ENCODE measurements at regions of chr1 and their contacts with region 1.

Region 1: GRCh38 chr1:169893494-169894362 is at the start of gene SCYL3:
- DNase-seq: peak; percentile 78 to 97 (median 86)
- ATAC-seq: peak; percentile 82
- H3K4me3 ChIP-seq: peak within 1 kb of the TSS; percentile 79
- H3K4me3 Mint-ChIP-seq: peak within 1 kb of the TSS; percentile 97
- H3K27ac ChIP-seq: peak within 1 kb of the TSS; percentile 98 to 100
- H3K27ac Mint-ChIP-seq: peak within 1 kb of the TSS; percentile 99
- H3K4me1 ChIP-seq: peaks cover 23% of the 10 kb centered on the region
- H3K4me1 Mint-ChIP-seq: peaks cover 53% of the 10 kb centered on the region
- H3K27me3 ChIP-seq: no peaks in the 10 kb centered on the region
- H3K27me3 Mint-ChIP-seq: no peaks in the 10 kb centered on the region
- CTCF ChIP-seq: no peak
- total RNA-seq, gene SCYL3: 3.5 to 3.6 TPM

Region 2: DNA sequence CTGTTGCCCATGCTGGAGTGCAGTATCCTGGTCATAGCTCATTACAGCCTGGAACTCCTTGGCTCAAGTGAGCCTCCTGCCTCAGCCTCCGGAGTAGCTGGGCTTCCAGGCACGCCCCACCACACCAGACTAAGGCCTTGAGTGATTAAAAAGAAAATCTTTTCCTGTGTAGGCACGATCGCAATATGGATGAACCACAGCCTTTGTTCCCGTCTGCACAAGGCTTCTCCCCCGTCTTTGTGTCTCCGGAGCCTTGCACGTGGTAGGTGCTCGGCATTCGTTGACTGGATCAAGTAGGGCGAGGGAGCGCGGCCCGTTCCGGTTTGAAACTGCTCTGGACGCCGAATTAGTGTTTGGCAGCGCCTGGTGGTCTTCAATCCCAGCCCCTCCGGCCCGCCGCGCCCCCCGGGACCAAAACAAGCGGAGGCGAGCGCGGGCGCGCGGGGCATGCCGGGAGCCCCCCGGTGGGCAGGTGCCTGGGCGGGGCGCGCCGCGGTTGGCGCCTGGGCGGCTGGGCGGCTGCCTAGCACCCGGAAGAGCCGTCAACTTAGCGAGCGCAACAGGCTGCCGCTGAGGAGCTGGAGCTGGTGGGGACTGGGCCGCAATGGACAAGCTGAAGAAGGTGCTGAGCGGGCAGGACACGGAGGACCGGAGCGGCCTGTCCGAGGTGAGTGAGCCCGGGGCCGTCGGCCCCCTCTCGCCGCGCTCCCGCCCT is 1668.1 kb before region 1 on chr1 and contains the start of gene SFT2D2:
- CTCF ChIA-PET with region 1: no interaction called
- POLR2A ChIA-PET with region 1: interaction called, 3 read pairs
- intact Hi-C with region 1: loop called in 1 of 2 experiments (anchors 5 kb)
- DNase-seq: peak; percentile 57 to 89 (median 72)
- ATAC-seq: peak; percentile 96
- H3K4me3 ChIP-seq: peak within 1 kb of the TSS; percentile 94
- H3K4me3 Mint-ChIP-seq: peak within 1 kb of the TSS; percentile 99
- H3K27ac ChIP-seq: peak within 1 kb of the TSS; percentile 28 to 66
- H3K27ac Mint-ChIP-seq: peak within 1 kb of the TSS; percentile 88
- H3K4me1 ChIP-seq: peaks cover 48% of the 10 kb centered on the region
- H3K4me1 Mint-ChIP-seq: peaks cover 54% of the 10 kb centered on the region
- H3K27me3 ChIP-seq: no peaks in the 10 kb centered on the region
- H3K27me3 Mint-ChIP-seq: peaks cover 10% of the 10 kb centered on the region
- CTCF ChIP-seq: no peak
- total RNA-seq, gene SFT2D2: 47.0 to 51.7 TPM

Region 3: DNA sequence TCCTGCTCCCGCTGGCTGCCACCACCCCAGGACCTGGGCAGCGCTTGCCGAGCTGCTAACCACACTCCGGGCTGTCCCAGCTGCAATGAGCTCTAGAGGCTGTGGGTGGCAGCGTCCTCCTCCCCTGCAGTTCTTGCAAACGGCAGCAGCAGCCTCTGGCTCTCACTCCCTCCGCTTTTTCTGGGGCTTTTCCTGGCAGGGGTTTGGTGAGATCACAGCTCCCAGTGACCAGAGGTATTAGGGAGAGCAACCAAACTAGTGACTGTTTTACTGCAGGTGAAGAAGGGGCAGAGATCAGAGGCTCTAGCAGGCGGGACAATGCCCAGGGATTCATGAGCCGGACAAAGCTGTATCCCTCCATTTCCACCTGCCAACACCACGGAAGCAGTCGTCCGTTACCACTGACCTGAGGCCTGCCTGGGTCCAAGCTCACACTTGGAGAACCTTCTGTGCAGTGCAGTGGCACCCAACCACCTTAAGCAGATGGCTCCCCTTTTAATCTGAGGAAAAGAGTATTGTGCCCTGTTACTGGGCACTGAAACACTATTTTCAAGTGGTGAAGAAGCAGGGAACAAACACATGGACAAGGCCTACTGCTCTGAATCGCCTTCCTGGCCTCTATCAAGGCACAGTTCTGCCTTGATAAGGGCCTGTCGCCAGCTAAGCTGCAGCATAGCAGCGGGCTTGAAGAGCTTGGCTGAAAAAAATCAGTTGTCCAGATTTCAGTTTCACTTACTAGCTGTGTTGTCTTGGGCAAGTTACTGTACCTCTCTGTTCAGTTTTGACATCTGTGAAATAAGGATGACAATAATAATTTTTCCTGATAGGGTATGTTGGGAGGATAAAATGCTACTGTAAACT is 307.1 kb before region 1 on chr1 and contains the start of gene F5:
- CTCF ChIA-PET with region 1: no interaction called
- POLR2A ChIA-PET with region 1: interaction called, 5 read pairs
- intact Hi-C with region 1: loop called in 1 of 2 experiments (anchors 10 kb)
- DNase-seq: peak; percentile 65 to 88 (median 72)
- ATAC-seq: peak; percentile 99
- H3K4me3 ChIP-seq: peak within 1 kb of the TSS; percentile 64
- H3K4me3 Mint-ChIP-seq: peak within 1 kb of the TSS; percentile 91
- H3K27ac ChIP-seq: no peak within 1 kb of the TSS
- H3K27ac Mint-ChIP-seq: peak within 1 kb of the TSS; percentile 71
- H3K4me1 ChIP-seq: peaks cover 19% of the 10 kb centered on the region
- H3K4me1 Mint-ChIP-seq: peaks cover 53% of the 10 kb centered on the region
- H3K27me3 ChIP-seq: no peaks in the 10 kb centered on the region
- H3K27me3 Mint-ChIP-seq: no peaks in the 10 kb centered on the region
- CTCF ChIP-seq: peak; percentile 71
- total RNA-seq, gene F5: 5.4 to 6.2 TPM

Region 4: GRCh38 chr1:169745015-169745861 is 148.5 kb before region 1 on chr1:
- CTCF ChIA-PET with region 1: no interaction called
- POLR2A ChIA-PET with region 1: no interaction called
- intact Hi-C with region 1: no loop called
- DNase-seq: no peak
- ATAC-seq: no peak
- H3K4me3 ChIP-seq: no peak overlapping the region
- H3K4me3 Mint-ChIP-seq: no peak overlapping the region
- H3K27ac ChIP-seq: no peak overlapping the region
- H3K27ac Mint-ChIP-seq: no peak overlapping the region
- H3K4me1 ChIP-seq: no peaks in the 10 kb centered on the region
- H3K4me1 Mint-ChIP-seq: no peaks in the 10 kb centered on the region
- H3K27me3 ChIP-seq: peaks cover 0 to 5% of the 10 kb centered on the region in 2 experiments
- H3K27me3 Mint-ChIP-seq: no peaks in the 10 kb centered on the region
- CTCF ChIP-seq: no peak

Region 5: GRCh38 chr1:169794530-169795416 is 99.0 kb before region 1 on chr1 and contains the start of gene METTL18:
- CTCF ChIA-PET with region 1: no interaction called
- POLR2A ChIA-PET with region 1: interaction called, 35 read pairs
- intact Hi-C with region 1: loop called (anchors 2 kb)
- DNase-seq: peak; percentile 82 to 96 (median 88)
- ATAC-seq: peak; percentile 97
- H3K4me3 ChIP-seq: peak within 1 kb of the TSS; percentile 81
- H3K4me3 Mint-ChIP-seq: peak within 1 kb of the TSS; percentile 99
- H3K27ac ChIP-seq: peak within 1 kb of the TSS; percentile 89 to 94
- H3K27ac Mint-ChIP-seq: peak within 1 kb of the TSS; percentile 94
- H3K4me1 ChIP-seq: peaks cover 13% of the 10 kb centered on the region
- H3K4me1 Mint-ChIP-seq: peaks cover 52% of the 10 kb centered on the region
- H3K27me3 ChIP-seq: no peaks in the 10 kb centered on the region
- H3K27me3 Mint-ChIP-seq: no peaks in the 10 kb centered on the region
- CTCF ChIP-seq: no peak
- total RNA-seq, gene METTL18: 5.1 to 5.6 TPM

Region 6: DNA sequence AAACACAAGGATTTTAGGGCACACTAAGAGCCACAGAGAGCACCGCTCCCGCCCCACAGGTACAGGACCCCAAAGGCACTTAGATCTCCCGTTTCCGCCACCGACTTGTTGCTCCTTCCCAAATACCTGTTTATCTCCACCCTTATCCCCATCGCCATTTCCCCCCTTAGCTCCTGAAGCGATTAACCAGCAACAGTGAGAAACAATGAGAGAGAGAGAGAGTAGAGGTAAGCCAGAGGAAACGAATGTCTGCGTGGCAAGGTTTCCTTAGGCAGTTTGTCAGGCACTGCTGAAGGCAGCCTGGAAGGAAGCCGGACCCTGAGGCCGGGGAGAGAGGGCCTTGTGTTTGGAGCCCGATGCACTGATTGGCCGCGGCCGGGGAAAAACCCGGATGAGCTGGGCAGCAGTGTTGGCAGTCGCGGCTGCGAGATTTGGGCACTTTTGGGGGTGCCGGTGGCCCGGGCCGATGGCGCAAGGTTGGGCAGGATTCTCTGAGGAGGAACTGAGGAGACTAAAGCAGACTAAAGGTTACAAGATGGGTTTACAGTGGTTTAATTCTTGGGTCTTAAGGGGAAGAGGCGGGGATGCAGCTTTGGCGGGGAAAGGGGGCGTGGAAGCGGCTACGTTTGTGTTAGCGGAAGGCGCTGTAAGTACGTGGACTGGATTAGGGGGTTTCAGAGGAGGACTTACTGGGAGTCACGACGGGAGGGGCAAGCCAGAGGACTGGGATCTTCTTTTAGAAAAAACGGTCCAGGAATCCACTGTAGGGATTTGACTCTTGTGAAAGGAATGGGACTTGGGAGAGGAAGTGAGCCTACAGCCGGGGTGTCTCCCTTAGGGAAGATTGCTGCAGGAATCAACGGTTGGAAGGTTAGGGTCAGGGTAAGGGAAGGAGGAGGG is 638.3 kb after region 1 on chr1 and contains the start of gene GORAB:
- CTCF ChIA-PET with region 1: no interaction called
- POLR2A ChIA-PET with region 1: interaction called, 12 read pairs
- intact Hi-C with region 1: no loop called
- DNase-seq: peak; percentile 69 to 92 (median 78)
- ATAC-seq: peak; percentile 91
- H3K4me3 ChIP-seq: peak within 1 kb of the TSS; percentile 61
- H3K4me3 Mint-ChIP-seq: no peak within 1 kb of the TSS
- H3K27ac ChIP-seq: peak within 1 kb of the TSS; percentile 73 to 86
- H3K27ac Mint-ChIP-seq: no peak within 1 kb of the TSS
- H3K4me1 ChIP-seq: peaks cover 12% of the 10 kb centered on the region
- H3K4me1 Mint-ChIP-seq: peaks cover 20% of the 10 kb centered on the region
- H3K27me3 ChIP-seq: no peaks in the 10 kb centered on the region
- H3K27me3 Mint-ChIP-seq: no peaks in the 10 kb centered on the region
- CTCF ChIP-seq: no peak
- total RNA-seq, gene GORAB: 23.0 to 26.6 TPM

Region 7: GRCh38 chr1:171781176-171781875 is 1887.6 kb after region 1 on chr1 and contains the start of gene METTL13:
- CTCF ChIA-PET with region 1: no interaction called
- POLR2A ChIA-PET with region 1: interaction called, 9 read pairs
- intact Hi-C with region 1: loop called in 1 of 2 experiments (anchors 10 kb)
- DNase-seq: peak; percentile 95 to 100 (median 98)
- ATAC-seq: peak; percentile 91
- H3K4me3 ChIP-seq: peak within 1 kb of the TSS; percentile 78
- H3K4me3 Mint-ChIP-seq: peak within 1 kb of the TSS; percentile 99
- H3K27ac ChIP-seq: peak within 1 kb of the TSS; percentile 63 to 75
- H3K27ac Mint-ChIP-seq: peak within 1 kb of the TSS; percentile 90
- H3K4me1 ChIP-seq: peaks cover 46% of the 10 kb centered on the region
- H3K4me1 Mint-ChIP-seq: peaks cover 47% of the 10 kb centered on the region
- H3K27me3 ChIP-seq: no peaks in the 10 kb centered on the region
- H3K27me3 Mint-ChIP-seq: no peaks in the 10 kb centered on the region
- CTCF ChIP-seq: no peak
- total RNA-seq, gene METTL13: 6.5 to 7.9 TPM